ENCODE measurements at regions of chr14 and their contacts with region 1.

Region 1: GRCh38 chr14:24086193-24086955 is 7.7 kb upstream of the PCK2 start:
- DNase-seq: no peak
- ATAC-seq: no peak
- H3K4me3 Mint-ChIP-seq: no peak overlapping the region
- H3K27ac Mint-ChIP-seq: no peak overlapping the region
- H3K4me1 Mint-ChIP-seq: peaks cover 19% of the 10 kb centered on the region
- H3K27me3 Mint-ChIP-seq: no peaks in the 10 kb centered on the region

Region 2: DNA sequence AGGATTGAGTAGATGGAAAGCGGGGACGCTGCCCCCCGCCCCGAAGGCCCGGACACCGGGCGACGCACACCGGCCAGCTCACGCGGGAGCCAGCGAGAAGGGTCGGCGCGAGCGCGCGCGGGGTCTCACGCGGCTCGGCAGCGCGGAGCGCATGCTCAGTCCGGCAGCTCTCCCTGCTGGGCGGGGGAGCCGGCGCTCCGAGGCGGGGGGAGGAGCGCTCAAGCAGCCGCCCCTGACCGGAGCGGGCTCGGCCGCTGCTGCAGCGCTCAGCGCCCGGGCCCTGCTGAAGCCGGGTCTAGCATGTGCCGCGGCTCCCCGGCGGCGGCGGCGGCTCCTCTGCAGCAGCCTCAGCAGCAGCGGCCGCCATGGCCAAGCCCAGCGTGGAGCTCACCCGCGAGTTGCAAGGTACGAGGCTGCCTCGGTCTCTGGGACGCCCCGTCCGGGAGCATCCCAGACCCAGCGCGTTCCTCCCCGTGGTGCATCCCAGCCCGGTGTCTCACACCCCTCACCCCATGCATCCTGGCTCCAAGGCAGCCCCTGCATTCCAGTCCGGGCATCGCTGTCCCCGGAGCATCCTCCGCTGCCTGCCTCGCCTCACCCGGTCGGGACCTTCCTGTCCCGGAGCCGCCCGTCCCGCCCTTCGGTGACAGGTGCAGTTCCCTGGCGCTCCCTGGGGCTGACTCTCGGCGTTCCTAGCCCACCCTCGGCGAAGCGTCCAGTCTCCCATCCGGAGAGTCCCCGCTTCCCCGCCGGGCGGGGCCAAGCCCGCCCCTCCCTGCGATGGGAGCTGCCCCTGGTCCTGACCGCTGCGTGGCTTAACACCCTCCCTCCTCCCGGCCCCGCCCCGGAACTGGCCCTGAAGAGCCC is 34.4 kb before region 1 on chr14 and contains the start of gene CARMIL3:
- CTCF ChIA-PET with region 1: interaction called, 213 read pairs
- POLR2A ChIA-PET with region 1: interaction called, 5 read pairs
- DNase-seq: peak; percentile 73
- ATAC-seq: peak; percentile 85
- H3K4me3 Mint-ChIP-seq: peak within 1 kb of the TSS; percentile 70
- H3K27ac Mint-ChIP-seq: peak within 1 kb of the TSS; percentile 70
- H3K4me1 Mint-ChIP-seq: peaks cover 26% of the 10 kb centered on the region
- H3K27me3 Mint-ChIP-seq: peaks cover 36% of the 10 kb centered on the region
- total RNA-seq, gene CARMIL3: 0.86 to 0.95 TPM

Region 3: DNA sequence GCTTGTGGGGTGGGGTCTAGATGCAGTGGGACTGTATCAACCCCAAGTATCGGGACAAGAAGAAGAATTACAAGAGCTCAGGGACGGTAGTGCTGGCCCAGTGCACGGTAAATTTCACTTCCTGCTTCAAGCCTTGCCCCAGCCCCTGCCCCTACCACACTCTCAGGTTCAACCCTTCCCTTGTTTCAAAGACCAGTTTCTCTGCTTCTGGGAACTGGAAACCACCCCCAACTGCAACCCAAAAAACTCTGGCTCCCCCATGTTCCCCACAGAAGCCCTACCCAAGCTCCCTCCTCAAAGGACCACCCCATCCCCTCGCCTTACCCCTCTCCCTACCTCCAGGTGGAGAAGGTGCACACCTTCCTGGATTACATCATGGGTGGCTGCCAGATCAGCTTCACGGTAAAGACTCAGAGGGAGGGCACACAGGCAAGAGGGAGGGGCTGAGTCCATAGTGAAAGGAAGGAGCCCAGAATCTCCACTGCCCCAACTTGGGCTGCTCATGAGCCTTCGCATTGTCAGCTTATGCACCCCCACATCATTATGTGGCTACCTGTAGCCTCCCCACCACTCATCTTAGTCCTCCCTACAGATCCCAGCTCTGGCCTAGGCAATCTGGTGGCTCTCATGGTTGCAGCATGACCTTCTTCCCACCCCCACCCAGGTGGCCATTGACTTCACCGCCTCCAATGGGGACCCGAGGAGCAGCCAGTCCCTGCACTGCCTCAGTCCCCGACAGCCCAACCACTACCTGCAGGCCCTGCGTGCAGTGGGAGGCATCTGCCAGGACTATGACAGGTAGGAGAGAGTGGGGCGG is 10.7 kb before region 1 on chr14:
- CTCF ChIA-PET with region 1: interaction called, 117 read pairs
- POLR2A ChIA-PET with region 1: interaction called, 41 read pairs
- DNase-seq: peak; percentile 44
- ATAC-seq: peak; percentile 51
- H3K4me3 Mint-ChIP-seq: peak overlapping the region; percentile 41
- H3K27ac Mint-ChIP-seq: peak overlapping the region; percentile 82
- H3K4me1 Mint-ChIP-seq: peaks cover 33% of the 10 kb centered on the region
- H3K27me3 Mint-ChIP-seq: peaks cover 2% of the 10 kb centered on the region